Sigmoid colon (tissue), 7 donors: ENCODE measurements at regions of chr1 and their contacts with region 1.

Region 1: GRCh38 chr1:904310-904950 is 19.3 kb upstream of the SAMD11 start:
- DNase-seq: peak; percentile 87
- H3K4me3 ChIP-seq: peak overlapping the region; percentile 16 to 52 (median 44)
- H3K27ac ChIP-seq: peak overlapping the region in 3 of 4 donors; percentile 7 to 57 (median 37)
- H3K4me1 ChIP-seq: peaks cover 0 to 16% (median 13%) of the 10 kb centered on the region in 4 donors
- H3K27me3 ChIP-seq: peaks cover 0 to 33% (median 4%) of the 10 kb centered on the region in 3 donors
- CTCF ChIP-seq: peak in 3 of 4 experiments; percentile 51 to 92 (median 67)
- EP300 ChIP-seq: no peak
- POLR2A ChIP-seq: no peak

Region 2: GRCh38 chr1:923131-923990 is 18.9 kb after region 1 on chr1 and contains the start of gene SAMD11:
- intact Hi-C with region 1: loop called (anchors 2 kb)
- DNase-seq: peak; percentile 91
- H3K4me3 ChIP-seq: peak within 1 kb of the TSS; percentile 12 to 58 (median 52)
- H3K27ac ChIP-seq: peak within 1 kb of the TSS; percentile 12 to 48 (median 40)
- H3K4me1 ChIP-seq: peaks cover 2 to 54% (median 46%) of the 10 kb centered on the region in 4 donors
- H3K27me3 ChIP-seq: peaks cover 26 to 89% (median 50%) of the 10 kb centered on the region in 3 donors
- CTCF ChIP-seq: no peak
- EP300 ChIP-seq: no peak
- POLR2A ChIP-seq: no peak
- total RNA-seq, gene SAMD11: 2.1 to 4.6 (median 4.2) TPM

Region 3: GRCh38 chr1:941588-942383 is 37.4 kb after region 1 on chr1:
- intact Hi-C with region 1: loop called (anchors 5 kb)
- DNase-seq: peak; percentile 88
- H3K4me3 ChIP-seq: peak overlapping the region in 3 of 4 donors; percentile 19 to 49 (median 42)
- H3K27ac ChIP-seq: peak overlapping the region; percentile 63 to 75 (median 64)
- H3K4me1 ChIP-seq: peaks cover 0 to 40% (median 38%) of the 10 kb centered on the region in 4 donors
- H3K27me3 ChIP-seq: peaks cover 47 to 71% (median 61%) of the 10 kb centered on the region in 3 donors
- CTCF ChIP-seq: no peak
- EP300 ChIP-seq: no peak
- POLR2A ChIP-seq: no peak

Region 4: GRCh38 chr1:958823-959729 is 54.6 kb after region 1 on chr1 and contains the start of gene NOC2L:
- intact Hi-C with region 1: loop called (anchors 5 kb)
- DNase-seq: peak; percentile 95
- H3K4me3 ChIP-seq: peak within 1 kb of the TSS; percentile 70 to 100 (median 86)
- H3K27ac ChIP-seq: peak within 1 kb of the TSS; percentile 38 to 69 (median 66)
- H3K4me1 ChIP-seq: peaks cover 0 to 48% (median 38%) of the 10 kb centered on the region in 4 donors
- H3K27me3 ChIP-seq: no peaks in the 10 kb centered on the region
- CTCF ChIP-seq: no peak
- EP300 ChIP-seq: no peak
- POLR2A ChIP-seq: peak in 1 of 2 donors; percentile 51
- total RNA-seq, gene NOC2L: 26.0 to 32.6 (median 27.8) TPM

Region 5: GRCh38 chr1:975896-976683 is 71.7 kb after region 1 on chr1:
- intact Hi-C with region 1: loop called (anchors 5 kb)
- DNase-seq: no peak
- H3K4me3 ChIP-seq: peak overlapping the region; percentile 19 to 53 (median 40)
- H3K27ac ChIP-seq: peak overlapping the region; percentile 38 to 78 (median 72)
- H3K4me1 ChIP-seq: peaks cover 0 to 10% (median 9%) of the 10 kb centered on the region in 4 donors
- H3K27me3 ChIP-seq: peaks cover 25 to 53% (median 48%) of the 10 kb centered on the region in 3 donors
- CTCF ChIP-seq: peak; percentile 30 to 81 (median 77)
- EP300 ChIP-seq: no peak
- POLR2A ChIP-seq: no peak